Right cardiac atrium (tissue), 5 donors: ENCODE measurements at regions of chr1 and their contacts with region 1.

Region 1: GRCh38 chr1:244864253-244865027 is at the start of gene HNRNPU:
- DNase-seq: peak; percentile 98 to 100 (median 99)
- ATAC-seq: peak; percentile 95 to 96
- H3K4me3 ChIP-seq: peak within 1 kb of the TSS; percentile 90
- H3K27ac ChIP-seq: peak within 1 kb of the TSS; percentile 98
- H3K4me1 ChIP-seq: peaks cover 5% of the 10 kb centered on the region
- H3K27me3 ChIP-seq: no peaks in the 10 kb centered on the region
- total RNA-seq, gene HNRNPU: 180 to 194 (median 184) TPM

Region 2: DNA sequence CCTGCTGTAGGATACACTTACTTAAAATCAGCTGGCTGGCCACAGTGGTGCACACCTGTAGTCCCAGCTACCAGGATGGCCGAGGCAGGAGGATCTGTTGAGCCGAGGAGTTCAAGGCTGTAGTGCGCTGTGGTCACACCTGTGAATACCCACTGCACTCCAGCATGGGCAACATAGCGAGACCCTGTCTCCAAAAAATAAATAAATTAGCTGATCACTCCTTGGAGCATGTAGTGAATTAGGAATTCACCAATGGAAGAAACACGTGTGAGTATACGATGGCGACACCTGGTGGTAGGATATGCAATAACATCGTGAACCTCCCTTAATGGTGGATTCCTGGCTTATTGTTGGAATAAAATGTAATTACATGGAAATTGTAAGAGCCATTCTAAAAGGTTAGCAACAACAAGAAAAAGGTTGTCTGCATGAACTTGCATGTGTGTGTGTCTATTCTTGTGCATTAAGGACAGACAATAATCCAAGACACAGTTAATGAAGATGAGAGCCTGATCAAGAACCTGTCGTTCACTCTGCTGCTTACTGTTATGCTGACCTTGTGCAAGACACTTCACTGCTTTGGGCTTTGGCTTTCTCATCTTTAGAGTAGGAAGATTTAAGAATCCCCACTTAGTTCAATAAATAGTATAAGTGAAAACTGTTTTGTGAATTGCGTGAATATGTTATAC is 67.6 kb before region 1 on chr1:
- intact Hi-C with region 1: no loop called
- DNase-seq: peak in 1 of 3 donors; percentile 63
- ATAC-seq: peak; percentile 65 to 67
- H3K4me3 ChIP-seq: no peak overlapping the region
- H3K27ac ChIP-seq: no peak overlapping the region
- H3K4me1 ChIP-seq: no peaks in the 10 kb centered on the region
- H3K27me3 ChIP-seq: no peaks in the 10 kb centered on the region

Region 3: DNA sequence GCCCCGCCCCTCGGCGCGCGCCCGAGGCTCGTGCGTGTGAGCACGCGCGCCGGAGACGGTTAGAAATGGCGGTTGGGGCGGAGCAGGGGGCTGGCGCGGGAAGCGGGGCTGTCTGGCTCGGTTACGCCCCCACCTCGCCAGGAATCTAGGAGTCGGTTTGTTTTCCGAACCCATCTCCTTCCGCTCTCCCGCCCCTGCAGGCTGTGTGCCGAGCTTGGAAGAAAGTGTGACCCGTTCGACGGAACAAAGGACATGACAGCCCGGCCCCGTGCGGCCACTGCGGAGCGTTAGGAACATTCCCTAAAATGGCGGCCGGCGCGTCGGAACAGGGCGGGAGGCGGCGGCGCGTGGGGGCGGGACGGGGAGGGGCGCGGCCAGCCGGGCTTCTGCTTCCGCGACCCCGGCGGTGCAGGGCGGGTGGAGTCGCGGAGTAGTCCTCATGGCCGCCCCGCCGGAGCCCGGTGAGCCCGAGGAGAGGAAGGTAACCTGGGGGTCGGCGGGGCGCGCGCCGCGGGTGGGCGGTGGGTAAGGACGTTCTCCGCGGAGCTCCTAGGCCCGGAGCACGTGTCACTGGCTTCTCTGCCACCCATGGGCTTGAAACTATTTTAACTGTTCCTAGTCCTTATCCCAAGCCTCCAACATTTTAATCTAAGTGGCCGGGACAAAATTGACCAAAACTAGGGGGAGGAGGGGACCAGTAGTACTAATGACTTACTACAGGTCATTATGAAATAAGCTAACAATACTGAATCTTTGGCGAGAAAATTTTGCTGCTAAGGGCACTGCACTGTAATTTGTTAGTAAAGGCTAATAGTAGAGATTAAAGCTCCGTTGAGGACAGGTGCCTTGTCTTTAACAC is 28.9 kb before region 1 on chr1 and contains the start of gene COX20:
- intact Hi-C with region 1: loop called in 2 of 4 experiments (anchors 2 kb)
- DNase-seq: peak; percentile 91 to 98 (median 97)
- ATAC-seq: peak; percentile 91 to 93
- H3K4me3 ChIP-seq: peak within 1 kb of the TSS; percentile 95
- H3K27ac ChIP-seq: peak within 1 kb of the TSS; percentile 93
- H3K4me1 ChIP-seq: peaks cover 4% of the 10 kb centered on the region
- H3K27me3 ChIP-seq: no peaks in the 10 kb centered on the region
- total RNA-seq, gene COX20: 57.8 to 68.5 (median 63.0) TPM

Region 4: DNA sequence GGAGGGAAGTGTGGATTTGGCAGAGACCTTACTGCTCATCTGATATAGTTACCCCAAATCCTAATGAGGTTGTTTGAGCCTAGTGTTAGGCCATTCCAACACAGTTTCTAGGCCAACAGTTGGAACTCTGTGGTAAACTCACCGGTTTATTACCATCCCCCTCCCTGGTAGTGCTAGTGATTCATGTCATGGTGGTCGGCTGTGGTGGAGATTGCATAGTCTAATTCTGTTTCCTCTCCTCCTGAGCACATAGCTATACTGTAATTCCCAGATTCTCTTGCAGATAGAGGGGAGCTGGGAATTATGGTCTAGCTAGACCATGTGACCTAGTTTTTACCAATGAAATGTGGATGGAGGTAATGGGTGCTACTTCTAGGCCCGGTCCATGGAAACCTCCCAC is 166.6 kb after region 1 on chr1:
- intact Hi-C with region 1: loop called in 1 of 4 experiments (anchors 10 kb)
- DNase-seq: no peak
- ATAC-seq: no peak
- H3K4me3 ChIP-seq: no peak overlapping the region
- H3K27ac ChIP-seq: no peak overlapping the region
- H3K4me1 ChIP-seq: no peaks in the 10 kb centered on the region
- H3K27me3 ChIP-seq: no peaks in the 10 kb centered on the region

Region 5: GRCh38 chr1:245336149-245336983 is 471.9 kb after region 1 on chr1:
- intact Hi-C with region 1: no loop called
- DNase-seq: no peak
- ATAC-seq: no peak
- H3K4me3 ChIP-seq: no peak overlapping the region
- H3K27ac ChIP-seq: no peak overlapping the region
- H3K4me1 ChIP-seq: no peaks in the 10 kb centered on the region
- H3K27me3 ChIP-seq: no peaks in the 10 kb centered on the region